ENCODE measurements at regions of chr11 and their contacts with region 1.

Region 1: DNA sequence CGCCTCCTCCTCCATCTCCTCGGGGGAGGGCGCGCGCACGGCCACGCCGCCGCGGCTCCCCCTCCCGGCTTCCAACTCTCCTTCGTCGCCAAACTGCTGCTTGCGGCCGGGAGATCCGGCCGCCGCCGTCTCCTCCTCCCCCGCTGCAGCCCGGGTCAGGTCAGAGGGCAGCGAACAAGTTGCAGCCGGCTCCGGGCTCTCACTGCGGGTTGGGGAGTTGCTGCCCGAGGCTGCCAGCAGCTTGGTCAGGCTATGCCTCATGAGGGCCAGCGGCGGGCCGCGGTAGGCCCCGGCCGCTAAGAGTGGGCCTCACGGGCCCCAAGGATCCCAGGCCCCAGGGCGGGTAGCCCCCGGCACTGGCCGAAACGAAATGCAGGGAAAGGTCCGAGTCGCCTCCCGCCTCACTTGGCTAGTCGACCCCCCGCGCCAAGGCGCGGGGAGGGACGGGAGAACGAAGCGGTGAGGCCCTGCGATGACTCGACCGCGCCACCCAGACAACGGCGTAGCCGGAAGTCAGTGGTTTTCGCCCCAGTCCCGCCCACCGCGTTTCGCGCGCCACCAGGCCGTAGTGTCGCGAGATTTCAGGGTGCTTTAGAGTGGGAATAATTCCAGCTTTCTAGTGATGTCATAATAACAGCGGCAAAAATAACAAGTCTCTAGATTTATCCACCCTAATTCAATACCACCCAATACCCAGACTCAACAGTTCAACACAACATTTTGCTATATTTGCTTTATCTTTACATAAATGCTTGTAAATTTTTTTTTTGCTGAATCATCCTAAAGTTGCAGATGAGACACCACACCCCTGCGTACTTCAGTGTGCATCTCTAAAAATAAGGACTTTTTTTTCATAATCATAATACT is at the start of gene CREBZF:
- DNase-seq: peak; percentile 91

Region 2: GRCh38 chr11:85682330-85683305 is 17.8 kb after region 1 on chr11:
- CTCF ChIA-PET with region 1: no interaction called
- POLR2A ChIA-PET with region 1: interaction called, 12 read pairs
- DNase-seq: peak; percentile 80

Measured in HEK293T (cell line).